MCF 10A (cell line): ENCODE measurements at regions of chr19 and their contacts with region 1.

Region 1: DNA sequence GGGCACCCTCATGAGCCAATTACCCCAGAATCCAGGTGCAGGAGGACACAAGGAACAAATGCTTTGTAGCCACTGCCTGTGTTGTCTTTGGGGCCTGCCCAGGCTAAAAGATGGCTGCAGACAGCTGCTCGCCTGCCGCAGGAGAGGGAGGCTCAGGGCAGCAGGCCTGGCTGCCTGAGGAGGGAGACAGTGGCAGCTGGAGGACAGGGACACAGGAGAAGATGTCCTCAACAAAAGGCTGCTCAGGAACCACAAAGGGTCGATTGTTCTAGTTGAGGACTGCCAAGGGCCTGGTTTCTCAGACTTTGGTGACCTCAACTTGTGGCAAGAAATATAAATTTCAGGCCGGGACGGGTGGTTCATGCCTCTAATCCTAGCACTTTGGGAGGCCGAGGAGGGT is 7.6 kb downstream of the SIRT2 start:
- DNase-seq: no peak
- H3K4me3 Mint-ChIP-seq: no peak overlapping the region
- H3K27ac Mint-ChIP-seq: no peak overlapping the region
- H3K4me1 Mint-ChIP-seq: no peaks in the 10 kb centered on the region
- H3K27me3 Mint-ChIP-seq: no peaks in the 10 kb centered on the region
- CTCF ChIP-seq: no peak

Region 2: GRCh38 chr19:38849860-38850435 is 41.8 kb before region 1 on chr19 and contains the start of gene HNRNPL:
- CTCF ChIA-PET with region 1: interaction called, 11 read pairs
- POLR2A ChIA-PET with region 1: interaction called, 3 read pairs
- intact Hi-C with region 1: loop called (anchors 1 kb)
- DNase-seq: peak; percentile 100
- H3K4me3 Mint-ChIP-seq: peak within 1 kb of the TSS; percentile 97
- H3K27ac Mint-ChIP-seq: peak within 1 kb of the TSS; percentile 99
- H3K4me1 Mint-ChIP-seq: peaks cover 18% of the 10 kb centered on the region
- H3K27me3 Mint-ChIP-seq: no peaks in the 10 kb centered on the region
- CTCF ChIP-seq: no peak
- total RNA-seq, gene HNRNPL: 288 and 421 TPM in 2 replicates

Region 3: GRCh38 chr19:38877781-38878574 is 13.8 kb before region 1 on chr19 and contains the start of gene RINL:
- CTCF ChIA-PET with region 1: interaction called, 12 read pairs
- POLR2A ChIA-PET with region 1: interaction called, 3 read pairs
- intact Hi-C with region 1: no loop called
- DNase-seq: no peak
- H3K4me3 Mint-ChIP-seq: no peak within 1 kb of the TSS
- H3K27ac Mint-ChIP-seq: peak within 1 kb of the TSS; percentile 42
- H3K4me1 Mint-ChIP-seq: peaks cover 9% of the 10 kb centered on the region
- H3K27me3 Mint-ChIP-seq: no peaks in the 10 kb centered on the region
- CTCF ChIP-seq: no peak
- total RNA-seq, gene RINL: 3.7 and 4.7 TPM in 2 replicates

Region 4: DNA sequence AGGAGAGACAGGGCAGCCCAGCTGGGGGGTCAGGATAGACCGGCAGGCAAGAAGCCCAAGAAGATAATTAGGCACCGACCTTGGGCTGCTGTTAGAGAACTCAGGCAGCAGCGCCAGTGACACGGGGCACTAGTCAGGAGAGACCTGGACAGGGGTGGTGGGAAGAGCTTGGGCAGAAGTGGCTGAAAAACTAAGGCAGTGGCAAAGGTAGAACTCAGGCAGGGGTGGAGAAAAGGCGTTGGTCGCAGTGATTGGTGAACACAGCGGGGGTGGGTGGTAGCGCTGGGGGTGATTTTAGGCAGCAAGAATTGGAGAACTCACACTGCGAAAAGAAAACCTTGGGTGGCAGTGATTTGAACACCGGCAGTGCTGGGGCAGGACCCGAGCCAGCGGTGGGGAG is 15.9 kb after region 1 on chr19:
- CTCF ChIA-PET with region 1: no interaction called
- POLR2A ChIA-PET with region 1: no interaction called
- intact Hi-C with region 1: no loop called
- DNase-seq: no peak
- H3K4me3 Mint-ChIP-seq: no peak overlapping the region
- H3K27ac Mint-ChIP-seq: no peak overlapping the region
- H3K4me1 Mint-ChIP-seq: no peaks in the 10 kb centered on the region
- H3K27me3 Mint-ChIP-seq: no peaks in the 10 kb centered on the region
- CTCF ChIP-seq: no peak

Region 5: DNA sequence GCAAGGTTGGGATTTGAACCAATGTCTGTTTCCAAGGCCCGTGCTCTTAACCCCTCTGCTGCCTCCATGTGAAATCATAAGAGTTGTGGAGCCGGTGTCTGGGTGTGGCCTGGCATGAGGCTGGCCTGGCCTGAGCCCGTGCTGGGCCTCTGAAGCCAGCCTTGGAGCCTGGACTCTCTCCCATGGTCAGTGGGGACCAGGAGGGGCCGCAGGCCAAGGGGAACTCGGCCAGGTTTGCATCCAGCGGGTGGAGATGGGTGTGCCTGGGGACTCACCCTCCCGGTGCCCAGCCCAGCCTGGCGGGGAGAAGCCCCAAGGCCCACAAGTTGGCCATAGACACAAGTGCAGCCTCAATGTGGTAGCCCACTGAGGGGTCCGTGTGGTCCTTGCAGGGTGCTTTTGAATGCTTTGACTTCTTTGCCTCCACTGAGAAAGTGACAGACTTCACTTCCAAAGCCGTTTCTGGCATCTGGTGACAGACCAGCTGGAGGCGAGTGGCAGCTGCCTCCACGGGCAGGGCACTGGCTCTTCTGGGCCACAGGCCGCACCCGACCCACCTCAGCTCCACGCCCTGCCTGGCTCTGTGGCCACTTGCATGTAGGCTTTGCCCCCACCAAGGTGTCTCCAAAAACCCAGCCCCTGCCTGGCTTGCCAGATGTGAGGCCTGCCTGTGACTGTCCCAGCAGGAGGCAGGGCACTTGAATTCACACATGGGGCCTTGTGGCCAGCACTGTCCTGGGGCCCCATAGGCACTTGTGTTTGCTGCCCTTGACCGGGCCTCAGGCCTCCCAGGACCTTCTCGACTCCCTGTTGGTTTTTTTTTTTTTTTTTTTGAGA is 278.8 kb after region 1 on chr19:
- CTCF ChIA-PET with region 1: no interaction called
- POLR2A ChIA-PET with region 1: no interaction called
- intact Hi-C with region 1: no loop called
- DNase-seq: no peak
- H3K4me3 Mint-ChIP-seq: no peak overlapping the region
- H3K27ac Mint-ChIP-seq: no peak overlapping the region
- H3K4me1 Mint-ChIP-seq: peaks cover 5% of the 10 kb centered on the region
- H3K27me3 Mint-ChIP-seq: no peaks in the 10 kb centered on the region
- CTCF ChIP-seq: no peak